ENCODE measurements at regions of chr2 and their contacts with region 1.

Region 1: DNA sequence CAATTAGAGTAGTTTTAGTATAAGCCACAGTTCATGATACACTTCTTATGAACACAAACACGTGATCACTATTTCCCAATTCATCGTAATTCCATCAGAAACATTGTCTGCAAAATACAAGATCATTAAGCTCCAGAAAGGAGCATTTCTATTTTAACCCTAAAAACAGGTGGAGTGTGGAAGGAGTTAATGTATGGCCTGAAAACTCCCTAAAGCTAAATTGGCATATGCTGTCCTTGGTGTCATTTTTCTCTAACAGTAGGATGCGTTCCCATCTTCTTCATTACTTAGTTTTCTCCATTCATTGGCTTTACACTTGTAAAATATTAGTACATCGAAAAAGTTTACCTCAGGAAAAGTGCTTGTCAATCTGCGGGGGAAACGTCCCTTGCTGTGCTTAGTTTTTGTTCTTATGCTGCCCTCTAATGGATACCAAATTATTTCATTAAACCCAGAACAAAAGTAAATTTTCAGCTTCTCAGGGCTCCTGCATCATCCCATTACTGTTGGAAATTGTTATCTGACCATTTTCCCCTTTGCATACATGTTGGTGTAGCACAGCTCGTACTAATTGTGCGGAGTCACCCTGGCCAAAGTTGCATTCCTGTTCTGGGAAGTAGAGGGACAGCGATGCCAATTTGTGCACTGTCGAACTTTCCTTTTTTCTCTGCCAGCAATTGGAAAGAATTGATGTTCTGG is 153.4 kb downstream of the GPD2 start:
- DNase-seq: peak; percentile 10
- H3K4me3 Mint-ChIP-seq: no peak overlapping the region
- H3K27ac Mint-ChIP-seq: no peak overlapping the region
- H3K4me1 Mint-ChIP-seq: peaks cover 4% of the 10 kb centered on the region
- H3K27me3 Mint-ChIP-seq: no peaks in the 10 kb centered on the region

Region 2: DNA sequence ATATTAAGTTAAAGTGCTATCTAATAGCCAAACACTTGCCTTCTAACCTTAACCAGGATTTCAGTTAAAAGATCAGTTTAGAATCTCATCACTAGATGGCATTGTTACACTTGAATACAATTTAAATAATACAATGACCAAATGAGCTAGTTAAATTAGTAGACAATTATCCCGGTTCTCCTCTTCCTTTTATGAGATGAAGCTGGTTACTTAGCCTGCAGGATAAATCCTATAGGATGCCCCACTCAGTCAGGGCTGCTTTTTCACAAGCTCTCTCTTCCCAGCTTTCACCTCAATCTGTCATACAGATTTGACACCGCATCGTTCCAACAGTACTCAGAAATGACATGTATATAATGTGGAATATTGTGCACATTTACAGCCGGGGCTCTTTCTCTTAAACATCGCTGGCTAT is 1212.3 kb before region 1 on chr2:
- CTCF ChIA-PET with region 1: interaction called, 34 read pairs
- POLR2A ChIA-PET with region 1: no interaction called
- intact Hi-C with region 1: loop called (anchors 2 kb)
- DNase-seq: no peak
- H3K4me3 Mint-ChIP-seq: no peak overlapping the region
- H3K27ac Mint-ChIP-seq: no peak overlapping the region
- H3K4me1 Mint-ChIP-seq: peaks cover 20% of the 10 kb centered on the region
- H3K27me3 Mint-ChIP-seq: no peaks in the 10 kb centered on the region

Region 3: DNA sequence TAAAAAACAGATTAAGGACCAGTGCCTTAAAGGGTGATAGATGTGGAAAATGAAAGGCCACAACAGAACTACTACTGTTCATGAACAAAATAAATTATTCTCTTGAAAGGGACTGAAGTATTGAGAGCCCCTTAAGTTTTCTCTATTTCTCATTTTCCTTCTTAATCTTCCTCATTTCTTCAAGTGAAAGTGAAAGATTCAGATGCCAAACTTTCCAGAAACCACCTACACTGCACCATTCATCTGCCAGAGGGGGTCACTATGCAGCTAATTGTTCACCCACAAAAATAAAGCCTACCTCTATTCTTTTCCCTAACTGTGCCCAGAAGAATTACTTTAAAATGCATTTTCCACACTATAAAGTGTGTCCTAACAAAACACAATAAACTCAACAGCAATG is 397.1 kb before region 1 on chr2:
- CTCF ChIA-PET with region 1: interaction called, 5 read pairs
- POLR2A ChIA-PET with region 1: no interaction called
- intact Hi-C with region 1: loop called (anchors 2 kb)
- DNase-seq: no peak
- H3K4me3 Mint-ChIP-seq: no peak overlapping the region
- H3K27ac Mint-ChIP-seq: no peak overlapping the region
- H3K4me1 Mint-ChIP-seq: no peaks in the 10 kb centered on the region
- H3K27me3 Mint-ChIP-seq: peaks cover under 1% of the 10 kb centered on the region

Region 4: GRCh38 chr2:156400706-156401678 is 188.5 kb before region 1 on chr2:
- CTCF ChIA-PET with region 1: interaction called, 10 read pairs
- POLR2A ChIA-PET with region 1: interaction called, 3 read pairs
- intact Hi-C with region 1: no loop called
- DNase-seq: peak; percentile 82
- H3K4me3 Mint-ChIP-seq: peak overlapping the region; percentile 84
- H3K27ac Mint-ChIP-seq: peak overlapping the region; percentile 95
- H3K4me1 Mint-ChIP-seq: peaks cover 18% of the 10 kb centered on the region
- H3K27me3 Mint-ChIP-seq: peaks cover 5% of the 10 kb centered on the region

Region 5: DNA sequence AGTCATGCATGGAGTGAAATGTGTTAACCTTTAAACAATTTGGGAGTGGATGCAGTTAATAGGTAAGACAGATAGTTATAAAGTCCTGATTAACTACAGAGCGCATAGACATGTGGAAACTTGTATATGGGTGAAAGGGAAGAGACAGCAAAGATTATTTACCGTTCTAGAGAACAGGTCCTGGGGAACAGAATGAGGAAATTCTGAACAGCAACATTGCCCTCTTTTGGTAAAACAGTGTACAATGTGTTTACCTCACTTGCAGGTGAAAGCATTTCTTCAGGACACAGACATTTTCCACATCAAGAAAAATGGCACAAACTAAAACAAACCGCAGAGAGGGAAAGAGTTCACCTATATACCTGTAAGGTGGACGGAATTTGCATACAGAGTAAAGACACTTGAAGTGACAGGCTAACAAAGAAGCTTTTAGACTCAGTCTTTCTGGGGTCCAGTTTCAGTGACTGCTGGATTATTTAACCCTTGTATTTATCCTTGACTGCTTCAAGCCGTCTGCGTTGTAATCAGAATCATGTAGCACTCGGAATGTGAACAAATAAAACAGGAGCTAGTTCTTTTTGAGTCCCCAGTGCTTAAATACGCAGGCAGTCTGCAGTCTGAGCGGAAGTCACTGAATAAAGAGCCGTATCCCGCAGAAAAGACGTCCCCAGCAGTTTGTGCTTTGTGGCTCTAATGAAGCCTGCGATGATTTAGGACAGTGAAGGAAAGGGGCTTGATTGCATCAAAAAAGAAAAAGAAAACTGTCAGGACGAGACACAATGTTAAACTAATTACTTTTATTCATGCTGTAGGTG is 303.1 kb after region 1 on chr2:
- CTCF ChIA-PET with region 1: interaction called, 3 read pairs
- POLR2A ChIA-PET with region 1: no interaction called
- intact Hi-C with region 1: loop called (anchors 10 kb)
- DNase-seq: no peak
- H3K4me3 Mint-ChIP-seq: no peak overlapping the region
- H3K27ac Mint-ChIP-seq: no peak overlapping the region
- H3K4me1 Mint-ChIP-seq: peaks cover 6% of the 10 kb centered on the region
- H3K27me3 Mint-ChIP-seq: peaks cover 16% of the 10 kb centered on the region